Activated CD8-positive, alpha-beta T cell treated with anti-CD3 and anti-CD28 coated beads for 36 hours (primary cell): ENCODE measurements at regions of chr17 and their contacts with region 1.

Region 1: DNA sequence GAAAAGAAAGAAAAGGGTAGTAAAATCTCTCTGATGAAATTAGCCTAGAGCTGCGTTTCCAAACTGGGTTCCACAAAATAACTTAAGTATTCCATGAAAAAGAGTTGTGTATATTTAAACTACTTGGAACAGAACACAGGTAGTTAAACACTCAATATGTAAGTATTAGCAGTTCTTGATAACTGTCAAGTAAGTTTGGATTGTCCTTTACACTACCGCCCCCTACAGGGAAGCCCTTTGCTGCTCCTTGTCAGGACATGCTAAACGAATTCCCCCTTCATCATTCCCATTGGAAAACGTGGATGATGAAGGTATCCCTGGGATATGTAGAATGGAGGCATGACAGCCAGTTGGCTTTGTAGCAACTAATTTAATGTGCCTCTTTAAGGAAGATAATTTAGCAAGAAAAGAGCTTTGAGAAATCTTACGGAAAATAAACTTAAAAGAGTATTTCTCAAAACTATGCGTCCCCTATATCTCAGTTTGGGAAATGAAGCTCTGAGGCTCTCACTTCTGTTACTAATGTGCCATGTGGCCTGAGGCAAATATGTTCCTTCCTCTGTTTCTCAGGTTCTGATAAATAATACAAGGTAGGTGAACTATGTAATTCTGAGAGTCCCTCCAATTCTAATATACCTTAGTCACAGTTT is 18.8 kb downstream of the NCBP3 start:
- DNase-seq: peak; percentile 89
- ATAC-seq: no peak
- H3K4me3 Mint-ChIP-seq: no peak overlapping the region
- H3K27ac Mint-ChIP-seq: peak overlapping the region; percentile 25
- H3K4me1 Mint-ChIP-seq: peaks cover 9% of the 10 kb centered on the region
- H3K27me3 Mint-ChIP-seq: no peaks in the 10 kb centered on the region
- CTCF ChIP-seq: peak; percentile 97

Region 2: DNA sequence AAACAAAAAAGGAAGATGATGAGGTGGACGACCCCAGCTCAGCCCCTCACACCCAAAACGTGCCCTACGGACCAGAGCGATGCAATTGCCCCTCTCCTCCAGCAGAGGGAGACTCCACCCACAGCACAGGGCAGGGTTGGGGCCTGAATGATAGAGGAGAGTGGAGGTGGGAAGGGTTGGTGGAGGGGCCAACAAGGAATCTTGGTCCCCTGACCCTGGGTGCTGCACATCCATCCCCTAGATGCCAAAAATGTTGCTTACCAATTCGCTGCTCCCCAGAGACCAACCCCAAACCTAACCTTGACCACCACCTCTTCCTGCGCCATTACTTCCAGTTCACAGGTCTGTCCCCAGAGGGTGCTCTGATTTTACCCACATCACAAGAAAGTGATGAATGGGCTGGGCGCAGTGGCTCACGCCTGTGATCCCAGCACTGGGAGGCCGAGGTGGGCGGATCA is 144.2 kb before region 1 on chr17:
- CTCF ChIA-PET with region 1: interaction called, 18 read pairs
- POLR2A ChIA-PET with region 1: no interaction called
- intact Hi-C with region 1: no loop called
- DNase-seq: peak; percentile 65
- ATAC-seq: peak; percentile 98
- H3K4me3 Mint-ChIP-seq: no peak overlapping the region
- H3K27ac Mint-ChIP-seq: no peak overlapping the region
- H3K4me1 Mint-ChIP-seq: peaks cover 7% of the 10 kb centered on the region
- H3K27me3 Mint-ChIP-seq: no peaks in the 10 kb centered on the region
- CTCF ChIP-seq: peak; percentile 96

Region 3: DNA sequence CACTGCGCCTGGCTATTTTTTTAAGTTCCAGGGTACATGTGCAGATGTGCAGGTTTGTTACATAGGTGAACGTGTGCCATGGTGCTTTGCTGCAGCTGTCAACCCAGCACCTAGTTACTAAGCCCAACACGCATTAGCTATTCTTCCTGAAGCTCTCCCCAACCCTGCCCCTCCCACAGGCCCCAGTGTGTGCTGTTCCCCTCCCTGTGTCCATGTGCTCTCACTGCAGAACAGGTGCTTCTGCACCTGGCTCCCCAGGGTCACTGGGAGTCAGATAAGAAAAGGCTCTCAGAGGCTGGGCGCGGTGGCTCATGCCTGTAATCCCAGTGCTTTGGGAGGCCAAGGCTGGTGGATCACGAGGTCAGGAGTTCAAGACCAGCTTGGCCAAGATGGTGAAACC is 97.4 kb before region 1 on chr17:
- CTCF ChIA-PET with region 1: interaction called, 367 read pairs
- POLR2A ChIA-PET with region 1: interaction called, 3 read pairs
- intact Hi-C with region 1: no loop called
- DNase-seq: no peak
- ATAC-seq: no peak
- H3K4me3 Mint-ChIP-seq: no peak overlapping the region
- H3K27ac Mint-ChIP-seq: no peak overlapping the region
- H3K4me1 Mint-ChIP-seq: peaks cover 20% of the 10 kb centered on the region
- H3K27me3 Mint-ChIP-seq: no peaks in the 10 kb centered on the region
- CTCF ChIP-seq: no peak

Region 4: DNA sequence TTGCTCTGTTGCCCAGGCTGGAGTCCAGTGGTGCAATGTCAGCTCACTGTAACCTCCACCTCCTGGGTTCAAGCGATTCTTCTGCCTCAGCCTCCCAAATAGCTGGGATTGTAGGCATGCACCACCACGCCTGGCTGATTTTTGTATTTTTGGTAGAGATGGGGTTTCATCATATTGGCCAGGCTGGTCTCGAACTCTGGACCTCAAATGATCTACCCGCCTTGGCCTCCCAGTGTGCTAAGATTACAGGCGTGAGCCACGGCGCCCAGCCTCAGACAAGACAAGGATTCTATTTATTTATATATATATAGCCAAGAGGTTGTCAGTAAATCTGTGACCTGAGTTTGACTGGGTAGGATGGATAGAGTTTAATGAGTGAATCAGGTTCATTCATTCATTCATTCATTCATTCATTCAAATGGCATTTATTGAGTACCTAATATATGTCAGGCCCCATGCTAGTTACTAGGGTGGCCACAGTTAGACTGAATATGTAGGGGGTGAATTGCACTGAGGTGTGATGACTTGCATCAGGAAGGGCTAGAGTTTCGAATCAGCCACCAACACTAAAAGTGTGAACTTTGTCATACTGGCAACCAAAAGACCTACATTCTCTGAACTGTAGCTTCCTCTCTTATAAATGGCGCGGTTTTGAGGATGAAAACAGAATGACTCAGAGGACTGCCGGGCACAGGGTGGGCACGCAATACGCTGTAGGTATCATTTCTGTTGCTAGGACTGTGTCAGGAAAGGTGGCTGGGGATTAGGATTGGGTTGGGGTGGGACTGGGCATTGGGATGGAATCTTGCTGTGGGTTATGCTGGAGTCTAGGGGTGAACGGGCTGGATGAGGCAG is 64.1 kb before region 1 on chr17:
- CTCF ChIA-PET with region 1: interaction called, 16 read pairs
- POLR2A ChIA-PET with region 1: no interaction called
- intact Hi-C with region 1: no loop called
- DNase-seq: peak; percentile 79
- ATAC-seq: peak; percentile 67
- H3K4me3 Mint-ChIP-seq: peak overlapping the region; percentile 43
- H3K27ac Mint-ChIP-seq: peak overlapping the region; percentile 97
- H3K4me1 Mint-ChIP-seq: peaks cover 53% of the 10 kb centered on the region
- H3K27me3 Mint-ChIP-seq: peaks cover 6% of the 10 kb centered on the region
- CTCF ChIP-seq: no peak

Region 5: GRCh38 chr17:3812771-3813170 is 14.5 kb before region 1 on chr17:
- CTCF ChIA-PET with region 1: interaction called, 36 read pairs
- POLR2A ChIA-PET with region 1: interaction called, 4 read pairs
- intact Hi-C with region 1: no loop called
- DNase-seq: no peak
- ATAC-seq: no peak
- H3K4me3 Mint-ChIP-seq: no peak overlapping the region
- H3K27ac Mint-ChIP-seq: no peak overlapping the region
- H3K4me1 Mint-ChIP-seq: peaks cover 9% of the 10 kb centered on the region
- H3K27me3 Mint-ChIP-seq: no peaks in the 10 kb centered on the region
- CTCF ChIP-seq: no peak